GM10248 (cell line): ENCODE measurements at regions of chr4 and their contacts with region 1.

Region 1: DNA sequence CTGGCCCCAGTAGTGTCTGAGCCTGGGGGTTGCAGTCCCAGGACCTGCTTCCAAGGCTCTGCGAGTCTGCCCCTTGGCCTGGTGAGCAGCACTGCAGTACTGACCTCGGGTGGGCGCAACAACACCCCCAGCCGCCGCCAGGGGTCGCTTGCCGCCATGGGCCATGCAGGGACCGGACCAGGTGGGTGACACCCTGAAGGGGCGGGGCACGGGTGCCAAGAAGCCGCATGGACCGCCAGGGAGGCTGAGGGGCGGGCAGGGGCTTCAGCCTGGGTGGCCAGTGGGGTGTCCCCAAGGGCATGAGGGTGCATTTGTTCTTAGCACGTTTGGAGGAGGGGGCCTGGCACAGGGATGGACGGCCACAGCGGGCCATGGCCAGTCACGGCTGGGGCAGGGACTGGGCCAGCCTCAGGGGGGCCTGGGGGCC is 25.0 kb downstream of the TACC3 start:
- DNase-seq: peak; percentile 86
- CTCF ChIP-seq: peak; percentile 83

Region 2: DNA sequence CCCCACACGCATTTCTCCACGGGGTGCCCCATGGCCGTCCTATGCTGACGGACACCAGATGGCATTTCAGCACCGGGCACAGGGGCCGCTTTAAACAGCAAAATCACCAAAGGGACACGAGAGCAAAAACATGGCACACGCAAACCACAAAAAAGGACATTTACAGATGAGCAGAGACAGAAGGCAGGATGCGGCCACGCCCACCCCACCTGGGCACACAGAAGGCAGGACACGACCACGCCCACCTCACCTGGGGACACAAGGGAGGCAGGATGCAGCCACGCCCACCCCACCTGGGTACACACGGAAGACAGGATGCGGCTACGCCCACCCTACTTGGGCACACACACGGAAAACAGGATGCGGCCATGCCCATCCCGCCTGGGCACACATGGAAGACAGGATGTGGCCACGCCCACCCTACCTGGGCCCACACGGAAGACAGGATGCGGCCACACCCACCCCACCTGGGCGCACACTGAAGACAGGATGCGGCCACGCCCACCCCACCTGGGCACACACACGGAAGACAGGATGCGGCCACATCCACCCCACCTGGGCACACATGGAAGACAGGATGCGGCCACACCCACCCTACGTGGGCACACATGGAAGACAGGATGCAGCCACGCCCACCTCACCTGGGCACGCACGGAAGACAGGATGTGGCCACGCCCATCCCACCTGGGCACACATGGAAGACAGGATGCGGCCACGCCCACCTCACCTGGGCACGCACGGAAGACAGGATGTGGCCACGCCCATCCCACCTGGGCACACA is 131.2 kb before region 1 on chr4:
- CTCF ChIA-PET with region 1: no interaction called
- POLR2A ChIA-PET with region 1: no interaction called
- DNase-seq: no peak
- CTCF ChIP-seq: no peak

Region 3: DNA sequence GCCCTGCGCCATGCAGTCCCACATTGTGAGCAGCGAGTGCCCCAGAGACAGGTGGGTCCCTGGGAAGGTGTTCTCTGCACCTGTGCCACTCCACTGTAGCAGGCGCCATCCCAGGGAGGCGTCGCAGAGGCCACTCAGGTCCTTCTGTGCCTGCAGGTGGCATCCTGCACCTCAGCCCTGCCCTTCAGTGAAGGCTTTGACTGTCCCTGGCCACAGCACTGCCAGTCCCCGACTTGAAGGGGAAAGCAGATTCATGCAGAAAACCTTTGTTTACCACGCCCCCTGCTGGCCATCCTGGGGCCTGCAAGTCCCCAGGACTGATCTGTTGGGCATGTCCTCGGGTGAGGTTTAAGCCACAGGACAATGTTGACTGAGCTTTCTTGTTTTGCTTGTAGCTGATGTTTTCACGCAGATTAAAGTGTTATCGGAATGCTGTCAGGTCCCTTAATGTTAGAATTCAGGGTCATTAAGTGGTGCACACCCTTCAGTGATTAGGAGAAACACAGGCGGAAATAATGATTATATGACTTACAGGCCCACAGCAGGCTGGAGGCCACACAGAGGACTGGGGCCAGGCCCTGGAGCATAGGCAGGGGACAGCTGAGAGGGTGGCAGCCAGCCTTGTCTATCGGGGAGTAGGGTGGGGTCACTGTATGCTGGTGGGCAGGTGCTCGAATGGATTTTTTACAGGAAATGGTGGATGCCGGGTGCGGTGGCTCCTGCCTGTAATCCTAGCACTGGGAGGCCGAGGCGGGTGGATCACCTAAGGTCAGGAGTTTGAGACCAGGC is 19.9 kb before region 1 on chr4:
- CTCF ChIA-PET with region 1: interaction called, 19 read pairs
- POLR2A ChIA-PET with region 1: no interaction called
- DNase-seq: peak; percentile 84
- CTCF ChIP-seq: peak; percentile 94

Region 4: DNA sequence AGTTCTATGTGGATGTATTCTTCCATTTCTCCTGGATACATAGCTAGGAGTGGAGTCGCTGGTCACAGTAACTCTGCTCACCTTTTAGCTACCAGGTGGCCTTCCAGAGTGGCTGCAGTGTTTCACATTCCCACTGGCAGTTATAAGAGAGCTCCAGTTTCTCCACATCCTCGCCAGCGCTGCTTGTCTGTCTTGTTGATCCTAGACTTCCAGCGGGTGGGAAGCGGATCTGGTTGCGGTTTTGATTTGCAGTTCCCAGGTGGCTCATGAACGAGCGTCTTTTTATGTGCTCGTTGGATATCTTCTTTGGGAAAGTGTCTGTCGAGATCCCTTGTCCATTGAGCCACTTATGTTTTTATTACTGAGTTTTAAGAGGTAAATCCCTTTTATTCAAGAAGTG is 13.4 kb before region 1 on chr4:
- CTCF ChIA-PET with region 1: interaction called, 19 read pairs
- POLR2A ChIA-PET with region 1: no interaction called
- DNase-seq: no peak
- CTCF ChIP-seq: no peak

Region 5: DNA sequence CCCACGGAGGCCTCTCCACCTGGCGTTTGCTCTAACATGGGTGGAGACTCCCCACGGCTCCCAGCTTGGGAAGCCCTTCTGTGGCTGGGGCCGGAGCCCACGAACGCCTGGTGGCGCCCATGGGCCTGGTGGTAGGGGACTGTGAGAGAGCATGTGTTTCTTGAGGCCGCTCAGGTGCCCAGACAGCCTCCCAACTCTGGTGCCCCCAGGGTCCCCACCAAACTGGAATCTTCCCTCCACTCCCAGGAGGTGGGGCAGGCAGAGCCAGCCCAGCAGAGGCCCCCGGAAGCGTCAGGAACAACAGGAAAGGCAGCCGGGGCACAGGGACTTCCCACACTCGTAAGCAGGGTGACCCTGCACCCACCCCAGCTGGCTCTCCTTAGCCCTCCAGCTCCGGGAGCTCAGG is 13.5 kb after region 1 on chr4:
- CTCF ChIA-PET with region 1: interaction called, 13 read pairs
- POLR2A ChIA-PET with region 1: no interaction called
- DNase-seq: no peak
- CTCF ChIP-seq: no peak

Region 6: GRCh38 chr4:1809754-1810511 is 63.7 kb after region 1 on chr4:
- CTCF ChIA-PET with region 1: interaction called, 87 read pairs
- POLR2A ChIA-PET with region 1: no interaction called
- DNase-seq: peak; percentile 89
- CTCF ChIP-seq: peak; percentile 95

Region 7: DNA sequence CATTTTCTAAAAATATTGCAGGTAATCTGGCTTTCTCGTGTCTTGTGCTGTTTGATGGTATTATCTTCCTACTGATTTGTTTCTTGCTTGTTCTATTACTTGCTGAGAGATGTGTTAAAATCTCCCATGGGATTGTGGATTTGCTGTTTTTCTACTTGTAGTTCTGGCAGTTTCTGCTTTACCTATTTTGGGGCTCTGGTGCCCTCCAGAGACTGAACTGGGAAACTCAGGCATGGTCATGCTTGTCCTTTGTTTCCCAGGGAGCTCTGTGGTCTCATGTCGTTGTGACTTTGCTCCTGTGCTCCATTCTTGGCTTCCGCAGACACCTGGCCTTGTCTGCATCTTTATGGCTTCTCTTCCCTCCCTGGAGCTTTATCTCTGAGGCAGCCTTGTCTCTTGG is 164.4 kb after region 1 on chr4:
- CTCF ChIA-PET with region 1: interaction called, 24 read pairs
- POLR2A ChIA-PET with region 1: no interaction called
- DNase-seq: no peak
- CTCF ChIP-seq: peak; percentile 18